PC-9 (cell line): ENCODE measurements at regions of chr3 and their contacts with region 1.

Region 1: DNA sequence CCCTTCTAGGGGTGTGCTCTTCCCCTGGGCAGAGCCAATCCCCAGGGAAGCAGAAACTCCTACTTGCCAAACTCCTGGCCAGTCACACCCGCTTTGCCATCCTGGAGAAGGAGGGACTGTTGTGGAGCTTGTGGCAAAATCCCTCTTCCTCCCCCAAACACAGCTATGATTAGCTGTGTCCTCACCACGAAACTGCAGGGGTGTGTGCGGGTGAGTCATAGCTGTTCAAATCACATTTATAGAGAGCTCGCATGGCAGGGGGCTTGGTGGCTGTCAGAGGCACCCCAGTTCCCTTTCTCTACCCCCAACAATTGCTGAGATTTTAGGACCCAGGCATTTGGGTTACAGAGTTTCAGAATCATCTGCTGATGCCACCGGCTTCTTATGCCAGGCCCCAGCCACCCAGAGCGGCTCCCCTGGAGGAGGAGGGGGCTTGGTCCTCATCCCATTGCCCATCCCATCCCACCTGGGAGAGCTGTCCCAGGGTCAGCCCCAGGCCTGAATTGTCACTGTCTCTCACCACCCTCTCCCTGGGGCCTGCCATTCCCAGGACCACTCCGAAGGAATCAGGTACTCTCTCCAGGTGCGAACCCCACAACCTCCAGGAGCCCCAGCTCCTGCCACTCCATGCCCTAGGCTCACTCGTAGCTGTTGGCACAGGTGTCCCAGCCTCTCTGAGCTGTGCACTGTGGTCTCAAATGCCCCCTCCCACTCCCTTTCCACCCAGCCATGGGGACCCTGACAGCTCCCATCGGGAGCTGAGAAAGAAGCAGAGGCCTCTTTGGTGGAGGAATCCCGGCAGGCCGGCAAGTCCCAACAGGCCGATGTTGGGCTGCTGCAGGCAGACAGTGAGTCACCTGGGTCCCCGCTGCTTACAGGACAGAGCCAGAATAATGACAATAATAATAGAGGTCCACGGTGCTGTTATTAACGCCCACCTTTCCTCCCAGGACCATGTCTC is 28.9 kb upstream of the MAGEF1 start:
- DNase-seq: peak; percentile 57 to 74
- H3K4me3 ChIP-seq: no peak overlapping the region
- H3K27ac ChIP-seq: no peak overlapping the region
- H3K4me1 ChIP-seq: peaks cover 43% of the 10 kb centered on the region
- H3K27me3 ChIP-seq: no peaks in the 10 kb centered on the region
- CTCF ChIP-seq: no peak

Region 2: DNA sequence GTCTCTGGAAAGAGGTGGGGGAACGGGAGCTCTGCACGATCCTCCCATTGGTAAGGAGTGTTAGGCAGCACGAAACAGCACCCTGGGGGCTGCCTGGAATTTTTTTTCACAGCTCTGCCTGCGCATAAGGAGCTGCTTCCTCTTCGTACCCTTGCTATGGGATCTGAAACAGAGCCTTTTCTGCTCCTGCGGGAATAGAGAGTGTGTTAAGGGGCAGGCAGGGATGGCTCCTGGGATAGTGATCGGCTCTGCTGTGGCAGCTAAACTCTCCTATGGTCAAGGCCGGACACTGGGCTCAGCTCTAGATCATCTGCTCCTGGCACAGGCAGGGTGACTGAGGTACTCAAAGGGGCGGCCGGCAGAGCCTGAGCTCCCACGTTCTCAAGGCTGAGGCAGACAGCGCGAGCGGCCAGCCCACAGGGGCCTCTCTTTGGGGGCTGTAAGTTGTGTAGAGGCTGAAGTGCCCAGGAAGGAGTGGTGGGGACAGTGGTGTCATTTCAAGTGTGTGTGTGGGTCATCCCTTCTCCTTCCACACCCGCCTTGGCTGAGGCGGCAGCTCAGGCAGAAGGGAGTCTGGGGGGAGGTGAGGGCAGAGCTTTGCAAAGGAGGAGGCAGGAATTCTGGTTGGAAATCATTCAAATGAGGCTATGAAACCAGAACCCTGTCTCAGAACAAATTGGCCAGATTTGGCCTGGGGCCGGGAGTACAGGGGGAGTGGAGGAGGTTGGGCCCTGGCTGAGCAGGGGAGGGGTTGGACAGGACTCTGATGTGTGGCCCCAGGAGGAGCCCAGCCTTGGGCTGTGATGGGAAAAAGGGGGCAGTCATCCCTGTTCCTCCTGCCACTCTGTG is 148.2 kb before region 1 on chr3:
- CTCF ChIA-PET with region 1: no interaction called
- POLR2A ChIA-PET with region 1: interaction called, 16 read pairs
- intact Hi-C with region 1: no loop called
- DNase-seq: no peak
- H3K4me3 ChIP-seq: no peak overlapping the region
- H3K27ac ChIP-seq: no peak overlapping the region
- H3K4me1 ChIP-seq: no peaks in the 10 kb centered on the region
- H3K27me3 ChIP-seq: peaks cover 7% of the 10 kb centered on the region; the same call in 1 of the 2 replicates
- CTCF ChIP-seq: no peak

Region 3: DNA sequence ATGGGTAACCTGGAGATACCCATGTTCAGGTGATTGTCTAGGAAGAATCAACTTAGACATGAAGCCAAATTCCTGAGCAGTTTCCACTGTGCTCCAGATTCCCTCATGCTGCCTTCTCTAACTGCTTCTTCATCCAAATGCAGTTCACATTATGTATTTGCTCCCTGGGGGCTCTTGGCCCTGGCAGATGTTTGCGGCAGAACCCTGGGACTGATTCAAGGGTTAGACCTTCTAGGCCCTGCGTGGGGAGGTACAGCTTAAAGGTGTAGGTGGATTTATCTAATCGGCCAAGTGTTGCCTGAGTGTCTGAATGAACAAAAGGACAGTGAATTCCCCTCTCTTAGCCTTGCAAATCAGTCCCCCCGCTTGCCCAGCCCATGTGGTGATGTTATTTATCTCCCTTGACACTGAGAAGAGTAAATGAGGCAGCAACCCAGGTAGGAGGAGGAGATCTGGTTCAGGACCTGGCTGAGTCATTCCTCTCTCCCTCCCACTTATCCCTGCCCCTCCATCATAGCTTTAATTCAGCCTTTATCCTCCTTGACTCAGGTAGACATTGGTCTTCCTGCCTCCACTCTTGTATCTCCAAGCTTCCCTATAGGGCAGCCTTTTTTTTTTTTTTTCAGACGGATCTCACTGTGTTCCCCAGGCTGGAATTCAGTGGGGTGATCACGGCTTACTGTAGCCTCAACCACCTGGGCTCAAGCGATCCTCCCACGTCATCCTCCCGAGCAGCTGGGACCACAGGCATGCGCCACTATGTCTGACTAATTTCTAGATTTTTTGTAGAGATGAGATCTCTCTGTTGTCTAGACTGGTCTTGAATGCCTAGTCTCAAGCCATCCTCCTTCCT is 83.7 kb before region 1 on chr3:
- CTCF ChIA-PET with region 1: no interaction called
- POLR2A ChIA-PET with region 1: no interaction called
- intact Hi-C with region 1: loop called (anchors 1 kb)
- DNase-seq: peak in 1 of 2 experiments; percentile 78
- H3K4me3 ChIP-seq: no peak overlapping the region
- H3K27ac ChIP-seq: no peak overlapping the region
- H3K4me1 ChIP-seq: peaks cover 38% of the 10 kb centered on the region
- H3K27me3 ChIP-seq: no peaks in the 10 kb centered on the region
- CTCF ChIP-seq: no peak

Region 4: DNA sequence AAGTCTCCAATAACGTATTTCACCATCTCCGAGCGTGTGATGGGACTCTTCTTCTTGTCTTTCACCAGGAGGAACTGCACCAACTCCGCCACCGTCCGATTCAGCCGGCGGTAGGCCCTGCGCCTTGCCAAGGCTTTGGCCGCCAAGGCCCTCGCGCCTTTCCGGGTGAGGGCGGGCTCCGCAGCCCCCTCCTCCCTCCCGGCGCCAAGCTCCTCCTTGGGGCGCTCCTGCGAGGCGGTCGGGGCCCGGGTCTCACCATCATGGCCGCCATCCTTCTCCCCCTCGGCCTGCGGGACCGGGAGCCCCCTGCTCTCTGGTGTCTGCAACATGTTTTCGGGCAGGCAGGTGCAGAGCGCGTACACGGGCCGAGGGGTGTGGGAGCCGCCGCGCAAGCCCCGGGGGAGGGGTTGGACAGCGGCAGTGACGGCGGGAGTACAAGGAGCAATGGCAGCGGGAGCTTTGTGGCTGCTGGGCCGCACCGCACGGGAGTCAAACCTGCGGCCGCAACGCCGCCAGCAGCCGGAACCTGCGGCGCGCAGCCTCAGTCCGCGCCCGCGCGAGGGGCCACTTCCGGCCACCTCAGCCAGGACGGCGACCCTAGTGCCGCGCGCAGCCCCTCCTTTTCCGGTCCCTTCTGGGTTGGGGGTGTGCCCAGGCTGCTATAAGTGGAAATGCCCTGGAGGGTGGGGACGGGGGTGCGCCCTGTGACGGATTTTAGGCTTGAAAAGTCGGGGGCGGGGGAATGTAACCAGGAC is 29.1 kb before region 1 on chr3 and contains the start of gene MAGEF1:
- CTCF ChIA-PET with region 1: no interaction called
- POLR2A ChIA-PET with region 1: interaction called, 5 read pairs
- intact Hi-C with region 1: loop called (anchors 2 kb)
- DNase-seq: peak; percentile 81 to 96
- H3K4me3 ChIP-seq: peak within 1 kb of the TSS; percentile 91
- H3K27ac ChIP-seq: peak within 1 kb of the TSS; percentile 79
- H3K4me1 ChIP-seq: peaks cover 21% of the 10 kb centered on the region
- H3K27me3 ChIP-seq: no peaks in the 10 kb centered on the region
- CTCF ChIP-seq: no peak
- total RNA-seq, gene MAGEF1: 97.2 and 106 TPM in 2 replicates

Region 5: DNA sequence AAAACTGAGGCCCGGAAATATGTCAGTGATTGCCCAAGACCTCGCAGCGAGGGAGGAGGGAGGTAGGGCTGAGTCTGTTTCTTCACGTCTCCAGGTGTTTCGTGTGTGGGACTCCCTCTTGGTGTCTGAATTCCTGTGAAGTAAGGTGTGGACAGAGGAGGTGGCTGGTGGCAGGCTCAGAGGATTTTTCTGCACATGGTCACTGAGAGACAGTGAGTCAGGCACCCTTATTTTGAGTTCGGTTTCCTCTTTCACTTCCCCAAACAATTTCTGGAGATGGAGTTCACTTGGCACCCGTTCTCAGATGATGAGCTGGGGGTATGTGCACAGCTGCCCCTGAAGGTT is 24.9 kb after region 1 on chr3:
- CTCF ChIA-PET with region 1: interaction called, 3 read pairs
- POLR2A ChIA-PET with region 1: interaction called, 4 read pairs
- intact Hi-C with region 1: loop called (anchors 2 kb)
- DNase-seq: peak; percentile 60 to 80
- H3K4me3 ChIP-seq: no peak overlapping the region
- H3K27ac ChIP-seq: peak overlapping the region; percentile 57
- H3K4me1 ChIP-seq: peaks cover 15% of the 10 kb centered on the region
- H3K27me3 ChIP-seq: peaks cover 15% of the 10 kb centered on the region; the same call in 1 of the 2 replicates
- CTCF ChIP-seq: no peak